Naive thymus-derived CD4-positive, alpha-beta T cell (primary cell): ENCODE measurements at regions of chr1 and their contacts with region 1.

Region 1: GRCh38 chr1:15272009-15272788 is 25.2 kb downstream of the FHAD1 start:
- DNase-seq: peak in 2 of 9 donors; percentile 12 to 33
- ATAC-seq: peak; percentile 80
- H3K4me3 ChIP-seq: no peak overlapping the region
- H3K4me3 Mint-ChIP-seq: no peak overlapping the region
- H3K27ac ChIP-seq: no peak overlapping the region
- H3K27ac Mint-ChIP-seq: no peak overlapping the region
- H3K4me1 ChIP-seq: no peaks in the 10 kb centered on the region
- H3K4me1 Mint-ChIP-seq: peaks cover 0 to 4% (median 0%) of the 10 kb centered on the region in 7 donors
- H3K27me3 ChIP-seq: peaks cover 0 to 3% of the 10 kb centered on the region in 2 donors
- H3K27me3 Mint-ChIP-seq: peaks cover 18 to 54% (median 32%) of the 10 kb centered on the region in 5 donors

Region 2: DNA sequence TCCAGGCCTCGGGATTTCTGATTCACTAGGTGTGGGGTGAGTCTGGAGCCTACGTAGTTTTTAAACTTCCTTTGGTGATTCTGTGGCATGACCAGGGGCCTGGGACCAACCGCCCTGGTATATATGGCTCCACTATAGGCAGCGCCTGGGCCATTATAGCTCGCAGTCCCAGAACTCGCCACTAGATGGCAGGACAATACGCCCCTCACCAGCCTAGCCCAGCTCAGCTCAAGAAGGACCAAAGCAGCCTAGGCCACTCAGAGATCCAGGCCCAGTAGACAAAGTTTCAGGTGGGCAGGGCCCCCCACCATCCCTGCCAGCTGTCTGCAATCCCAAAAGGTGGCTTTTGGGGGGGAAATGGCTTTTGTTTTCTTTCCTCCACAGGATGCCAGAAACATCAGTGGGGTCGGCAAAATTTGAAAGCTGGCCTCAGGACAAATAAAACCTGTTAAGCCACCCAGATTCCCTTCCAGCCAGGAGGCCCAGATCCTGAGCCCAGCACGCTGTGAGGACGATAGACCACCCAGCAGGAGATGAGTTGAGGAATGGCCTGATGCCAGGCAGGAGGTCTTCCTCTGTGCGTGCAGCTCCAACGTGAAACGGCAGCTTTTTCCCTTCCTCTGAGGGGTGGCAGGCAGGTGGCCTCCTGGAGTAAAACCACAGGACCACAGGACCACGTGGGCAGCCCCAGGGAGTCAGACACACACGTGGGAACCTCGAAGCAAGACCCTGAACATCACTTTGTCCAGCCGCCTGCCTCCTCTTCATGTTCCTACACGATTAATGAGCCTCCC is 143.5 kb before region 1 on chr1:
- CTCF ChIA-PET with region 1: no interaction called
- POLR2A ChIA-PET with region 1: no interaction called
- intact Hi-C with region 1: loop called in 1 of 2 experiments (anchors 1 kb)
- DNase-seq: peak in 8 of 9 donors; percentile 15 to 75 (median 42)
- ATAC-seq: peak; percentile 97
- H3K4me3 ChIP-seq: no peak overlapping the region
- H3K4me3 Mint-ChIP-seq: no peak overlapping the region
- H3K27ac ChIP-seq: no peak overlapping the region
- H3K27ac Mint-ChIP-seq: no peak overlapping the region
- H3K4me1 ChIP-seq: no peaks in the 10 kb centered on the region
- H3K4me1 Mint-ChIP-seq: no peaks in the 10 kb centered on the region
- H3K27me3 ChIP-seq: no peaks in the 10 kb centered on the region
- H3K27me3 Mint-ChIP-seq: peaks cover 11 to 28% (median 17%) of the 10 kb centered on the region in 5 donors

Region 3: GRCh38 chr1:15152318-15153183 is 119.6 kb before region 1 on chr1:
- CTCF ChIA-PET with region 1: no interaction called
- POLR2A ChIA-PET with region 1: no interaction called
- intact Hi-C with region 1: loop called in 1 of 2 experiments (anchors 1 kb)
- DNase-seq: no peak
- ATAC-seq: peak; percentile 5
- H3K4me3 ChIP-seq: no peak overlapping the region
- H3K4me3 Mint-ChIP-seq: peak overlapping the region in 8 of 10 donors; percentile 47 to 73 (median 62)
- H3K27ac ChIP-seq: no peak overlapping the region
- H3K27ac Mint-ChIP-seq: peak overlapping the region in 1 of 9 donors; percentile 18
- H3K4me1 ChIP-seq: peaks cover 4 to 8% of the 10 kb centered on the region in 2 donors
- H3K4me1 Mint-ChIP-seq: peaks cover 8 to 41% (median 27%) of the 10 kb centered on the region in 7 donors
- H3K27me3 ChIP-seq: peaks cover 0 to 5% of the 10 kb centered on the region in 2 donors
- H3K27me3 Mint-ChIP-seq: peaks cover 48 to 72% (median 55%) of the 10 kb centered on the region in 5 donors